PC-9 (cell line): ENCODE measurements at regions of chr19 and their contacts with region 1.

Region 1: GRCh38 chr19:16495982-16496612 is at the starts of genes C19orf44 and CALR3:
- DNase-seq: peak; percentile 98
- H3K4me3 ChIP-seq: peak within 1 kb of the TSS; percentile 70
- H3K27ac ChIP-seq: peak within 1 kb of the TSS; percentile 50
- H3K4me1 ChIP-seq: peaks cover 55% of the 10 kb centered on the region
- H3K27me3 ChIP-seq: no peaks in the 10 kb centered on the region
- CTCF ChIP-seq: no peak
- total RNA-seq, gene C19orf44: 5.0 and 6.7 TPM in 2 replicates
- total RNA-seq, gene CALR3: not detected in 2 replicates

Region 2: DNA sequence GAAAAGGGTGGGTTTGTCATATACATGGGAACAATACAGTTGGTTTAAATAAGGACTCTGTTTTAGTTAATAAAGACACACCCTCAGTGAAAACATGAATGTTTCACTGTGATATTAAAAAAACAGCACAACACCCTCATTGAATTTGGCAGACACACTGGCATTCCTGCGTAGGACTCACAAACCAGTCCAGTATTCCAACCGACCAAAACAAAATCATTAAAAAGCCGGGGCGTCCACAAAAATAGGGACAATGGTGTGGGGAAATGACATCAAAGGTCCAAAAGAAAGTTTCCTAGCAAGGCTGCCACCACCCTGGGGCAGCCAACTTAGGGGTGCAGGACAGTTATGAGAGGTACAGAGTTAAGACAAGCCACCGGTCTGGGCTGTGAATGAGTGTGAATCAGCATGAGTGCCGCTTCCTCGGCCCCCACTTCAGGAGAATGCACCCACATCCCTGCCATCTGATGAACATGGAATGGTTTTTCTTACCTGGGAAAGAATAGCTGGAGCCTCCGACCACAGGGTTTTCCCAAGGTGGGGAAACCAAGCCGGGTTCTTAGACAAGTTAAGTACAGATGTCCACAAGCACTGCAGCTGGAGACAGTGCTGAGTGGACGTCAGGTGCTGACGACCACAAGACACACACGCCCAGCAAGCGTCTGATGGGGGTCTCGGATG is 98.2 kb before region 1 on chr19:
- CTCF ChIA-PET with region 1: no interaction called
- POLR2A ChIA-PET with region 1: no interaction called
- intact Hi-C with region 1: no loop called
- DNase-seq: no peak
- H3K4me3 ChIP-seq: no peak overlapping the region
- H3K27ac ChIP-seq: no peak overlapping the region
- H3K4me1 ChIP-seq: no peaks in the 10 kb centered on the region
- H3K27me3 ChIP-seq: no peaks in the 10 kb centered on the region
- CTCF ChIP-seq: no peak

Region 3: GRCh38 chr19:16462757-16463250 is 33.3 kb before region 1 on chr19:
- CTCF ChIA-PET with region 1: no interaction called
- POLR2A ChIA-PET with region 1: no interaction called
- intact Hi-C with region 1: loop called (anchors 5 kb)
- DNase-seq: peak; percentile 49 to 80
- H3K4me3 ChIP-seq: no peak overlapping the region
- H3K27ac ChIP-seq: no peak overlapping the region; the same call in 1 of the 2 replicates
- H3K4me1 ChIP-seq: peaks cover 26% of the 10 kb centered on the region
- H3K27me3 ChIP-seq: no peaks in the 10 kb centered on the region
- CTCF ChIP-seq: no peak

Region 4: DNA sequence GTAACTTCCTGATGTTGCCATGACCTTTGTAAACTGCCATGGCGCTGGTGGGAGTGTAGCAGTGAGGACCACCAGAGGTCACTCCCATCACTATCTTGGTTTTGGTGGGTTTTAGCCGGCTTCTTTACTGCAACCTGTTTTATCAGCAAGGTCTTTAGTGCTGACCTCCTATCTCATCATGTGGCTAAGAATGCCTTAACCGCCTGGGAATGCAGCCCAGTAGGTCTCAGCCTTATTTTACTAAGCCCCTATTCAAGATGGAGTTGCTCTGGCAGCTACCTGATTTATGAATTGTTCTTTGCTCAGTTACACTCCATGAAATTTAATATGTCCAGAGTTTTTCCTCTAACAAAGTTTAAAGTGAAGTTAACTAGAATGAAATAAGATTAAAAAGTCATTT is 19.7 kb before region 1 on chr19:
- CTCF ChIA-PET with region 1: no interaction called
- POLR2A ChIA-PET with region 1: no interaction called
- intact Hi-C with region 1: loop called (anchors 1 kb)
- DNase-seq: no peak
- H3K4me3 ChIP-seq: no peak overlapping the region
- H3K27ac ChIP-seq: no peak overlapping the region
- H3K4me1 ChIP-seq: peaks cover 14% of the 10 kb centered on the region
- H3K27me3 ChIP-seq: no peaks in the 10 kb centered on the region
- CTCF ChIP-seq: no peak